ENCODE measurements at regions of chr1 and their contacts with region 1.

Region 1: GRCh38 chr1:117284399-117285215 is 73.9 kb upstream of the VTCN1 start:
- DNase-seq: peak in 3 of 5 donors; percentile 27 to 87 (median 77)
- H3K4me3 ChIP-seq: no peak overlapping the region
- H3K27ac ChIP-seq: no peak overlapping the region
- H3K4me1 ChIP-seq: no peaks in the 10 kb centered on the region
- H3K27me3 ChIP-seq: no peaks in the 10 kb centered on the region
- CTCF ChIP-seq: peak; percentile 61

Region 2: GRCh38 chr1:117059678-117060440 is 224.7 kb before region 1 on chr1 and contains the start of gene TTF2:
- intact Hi-C with region 1: loop called (anchors 10 kb)
- DNase-seq: peak; percentile 95 to 99 (median 98)
- H3K4me3 ChIP-seq: peak within 1 kb of the TSS; percentile 89 to 95 (median 90)
- H3K27ac ChIP-seq: peak within 1 kb of the TSS; percentile 65 to 71
- H3K4me1 ChIP-seq: no peaks in the 10 kb centered on the region
- H3K27me3 ChIP-seq: no peaks in the 10 kb centered on the region
- CTCF ChIP-seq: peak; percentile 7
- total RNA-seq, gene TTF2: 19.0 TPM

Measured in kidney (tissue), 22 donors.